ENCODE measurements at regions of chr4 and their contacts with region 1.

Region 1: DNA sequence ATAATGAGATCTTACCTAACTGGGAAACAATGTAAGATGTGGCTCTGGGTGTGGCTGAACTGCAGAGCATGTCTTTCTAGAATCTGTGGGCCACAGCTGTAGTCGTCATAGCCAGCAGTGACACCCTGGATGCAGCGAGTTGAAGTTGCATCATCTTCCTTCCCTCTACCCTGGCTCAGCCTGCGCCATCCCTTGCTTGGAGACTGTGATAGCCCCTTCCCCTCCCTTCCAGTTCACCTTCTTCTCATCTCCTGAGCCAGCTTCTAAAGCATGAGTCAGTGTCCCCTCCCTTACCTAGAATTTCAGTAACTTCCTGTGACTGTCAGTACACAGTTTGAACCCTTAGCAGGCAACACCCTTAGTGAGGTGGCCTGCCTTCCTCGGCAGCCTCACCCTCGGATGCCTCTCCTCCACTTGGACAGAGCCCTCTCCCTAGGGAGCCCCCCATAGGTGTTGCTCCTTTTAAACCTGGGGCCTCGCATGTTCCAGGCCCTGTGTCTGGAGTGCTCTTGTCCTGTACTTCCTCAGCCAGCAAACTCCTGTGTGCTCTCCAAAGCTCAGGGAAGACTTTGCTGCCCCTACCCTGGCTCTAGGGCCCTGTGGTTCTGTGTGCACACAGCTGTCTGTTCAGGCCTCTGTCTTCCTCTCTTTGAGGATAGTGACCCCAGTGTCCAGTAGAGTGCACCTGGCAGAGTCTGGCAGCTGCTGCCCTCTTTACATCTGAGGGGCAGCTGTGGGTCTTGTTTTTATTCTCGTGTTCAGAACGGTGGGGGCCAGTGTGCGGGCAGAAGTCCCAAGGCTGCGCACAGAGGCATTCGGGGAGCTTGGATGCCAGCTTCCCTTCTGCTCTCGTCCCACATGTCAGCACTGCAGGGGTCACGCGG is 43.8 kb upstream of the TADA2B start:
- DNase-seq: peak; percentile 79
- H3K4me3 Mint-ChIP-seq: peak overlapping the region; percentile 41
- H3K27ac Mint-ChIP-seq: peak overlapping the region; percentile 95
- H3K4me1 Mint-ChIP-seq: peaks cover 44% of the 10 kb centered on the region
- H3K27me3 Mint-ChIP-seq: no peaks in the 10 kb centered on the region

Region 2: DNA sequence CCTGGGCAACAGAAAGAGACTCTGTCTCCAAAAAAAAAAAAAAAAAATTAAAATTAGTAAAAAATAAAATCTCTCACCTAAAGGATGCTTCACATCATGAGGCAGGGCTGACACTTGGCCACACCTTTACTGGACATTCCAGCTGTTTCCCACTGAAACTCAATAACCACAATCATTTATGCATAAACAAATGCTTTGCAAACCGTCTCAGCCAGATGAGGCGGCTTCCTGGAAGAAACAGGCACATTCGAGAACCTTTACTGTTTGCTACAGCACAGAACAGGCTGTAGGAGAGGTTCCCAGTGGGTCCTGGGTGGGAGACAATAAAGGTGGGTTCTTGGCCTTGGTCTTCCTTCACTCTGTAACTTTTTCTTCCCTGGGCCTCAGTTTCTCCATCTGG is 100.7 kb before region 1 on chr4:
- CTCF ChIA-PET with region 1: no interaction called
- POLR2A ChIA-PET with region 1: interaction called, 10 read pairs
- DNase-seq: peak; percentile 39
- H3K4me3 Mint-ChIP-seq: peak overlapping the region; percentile 40
- H3K27ac Mint-ChIP-seq: peak overlapping the region; percentile 94
- H3K4me1 Mint-ChIP-seq: peaks cover 63% of the 10 kb centered on the region
- H3K27me3 Mint-ChIP-seq: no peaks in the 10 kb centered on the region

Region 3: DNA sequence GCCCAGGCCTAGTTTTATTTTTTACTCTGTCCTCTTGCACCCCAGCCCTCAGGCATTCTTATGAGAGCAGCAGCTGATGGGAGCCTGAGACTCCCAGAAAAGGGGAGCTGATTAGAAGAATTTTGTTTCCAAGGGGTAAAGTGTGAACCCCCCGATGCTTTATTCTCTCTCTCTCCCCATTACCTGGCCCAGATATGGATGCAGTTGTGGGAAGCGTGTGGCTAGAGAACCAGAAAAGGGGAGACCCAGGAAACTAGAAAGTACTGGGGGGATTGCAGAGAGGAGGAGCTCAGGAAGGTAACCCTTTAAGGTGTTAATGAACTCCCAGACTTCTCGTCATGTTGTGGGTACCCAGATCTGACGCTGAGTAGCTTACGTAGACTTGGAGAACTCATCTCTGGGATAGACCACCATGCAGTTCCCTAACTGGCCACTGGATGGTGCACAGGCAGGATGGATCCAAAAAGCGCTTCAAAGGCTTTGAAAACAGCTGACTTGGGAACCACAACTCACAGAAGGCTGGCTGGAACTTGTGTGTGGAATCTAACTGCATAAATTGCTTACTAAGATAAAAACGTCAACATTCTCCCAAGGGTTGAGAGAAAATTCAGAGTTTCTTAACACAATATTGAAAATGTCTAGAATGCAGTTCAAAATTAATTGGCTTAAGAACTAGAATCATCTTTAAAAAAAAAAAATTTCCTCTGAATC is 25.1 kb before region 1 on chr4:
- CTCF ChIA-PET with region 1: interaction called, 17 read pairs
- POLR2A ChIA-PET with region 1: interaction called, 8 read pairs
- DNase-seq: peak; percentile 83
- H3K4me3 Mint-ChIP-seq: no peak overlapping the region
- H3K27ac Mint-ChIP-seq: no peak overlapping the region
- H3K4me1 Mint-ChIP-seq: peaks cover 19% of the 10 kb centered on the region
- H3K27me3 Mint-ChIP-seq: no peaks in the 10 kb centered on the region

Region 4: DNA sequence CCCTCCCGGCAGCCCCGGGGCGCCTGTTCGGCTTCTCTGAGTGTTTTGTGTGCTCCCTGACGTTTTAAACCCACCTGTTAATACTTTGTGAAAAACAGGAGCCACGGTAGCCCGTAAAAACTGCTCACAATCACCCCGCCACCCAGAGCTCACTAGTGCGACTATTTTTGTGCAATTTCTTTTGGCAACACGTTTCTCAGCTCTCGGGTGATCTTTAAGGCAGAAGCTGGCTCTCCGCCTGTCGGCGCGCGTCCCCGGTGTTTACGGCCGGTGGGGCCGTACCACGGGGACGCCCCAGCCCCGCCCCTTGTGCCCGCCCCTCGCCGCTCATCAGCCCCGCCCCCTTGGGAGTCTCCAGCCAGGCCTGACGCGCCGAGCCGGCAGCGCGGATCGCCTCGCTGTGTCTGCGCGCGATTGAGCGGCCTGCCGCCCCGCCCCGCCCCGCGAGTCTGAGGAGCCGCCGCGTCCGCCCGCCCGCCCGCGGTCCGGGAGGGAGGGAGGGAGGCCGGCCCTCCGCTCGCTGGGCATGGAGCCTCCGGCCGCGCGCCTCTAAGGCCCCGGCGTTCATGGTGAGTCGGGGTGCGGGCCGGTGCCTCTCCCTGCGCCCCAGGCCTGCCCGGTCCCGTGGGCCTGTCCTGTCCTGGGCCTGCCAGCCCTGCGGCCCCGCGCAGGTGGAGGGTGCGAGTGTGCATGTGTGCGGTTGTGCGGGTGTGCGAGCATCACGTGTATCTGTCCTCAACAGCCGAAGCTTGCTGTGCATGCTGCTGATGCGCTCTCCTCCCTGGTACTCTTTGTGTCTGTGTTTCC is 12.4 kb before region 1 on chr4:
- CTCF ChIA-PET with region 1: interaction called, 24 read pairs
- POLR2A ChIA-PET with region 1: interaction called, 69 read pairs
- DNase-seq: peak; percentile 95
- H3K4me3 Mint-ChIP-seq: peak overlapping the region; percentile 98
- H3K27ac Mint-ChIP-seq: peak overlapping the region; percentile 95
- H3K4me1 Mint-ChIP-seq: peaks cover 81% of the 10 kb centered on the region
- H3K27me3 Mint-ChIP-seq: no peaks in the 10 kb centered on the region

Region 5: DNA sequence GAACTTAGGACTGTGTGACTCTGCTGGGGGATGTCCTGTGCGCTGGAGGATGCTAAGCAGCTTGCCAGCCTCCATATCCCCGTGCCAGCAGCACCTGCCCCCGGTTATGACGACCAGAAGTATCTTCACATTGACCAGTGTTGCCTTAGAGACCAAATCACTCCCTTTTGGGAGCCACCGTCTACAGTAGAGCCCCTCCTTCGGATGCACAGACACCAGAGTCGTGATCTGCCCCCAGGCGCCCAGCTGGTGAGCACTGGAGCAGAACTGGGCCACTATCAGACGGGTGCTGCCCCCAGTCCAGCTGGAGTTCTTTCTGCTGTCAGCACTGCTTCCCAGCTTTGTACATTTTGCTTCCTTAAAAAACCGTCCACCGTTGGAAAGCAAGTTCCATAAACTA is 13.8 kb after region 1 on chr4:
- CTCF ChIA-PET with region 1: interaction called, 5 read pairs
- POLR2A ChIA-PET with region 1: interaction called, 16 read pairs
- DNase-seq: no peak
- H3K4me3 Mint-ChIP-seq: no peak overlapping the region
- H3K27ac Mint-ChIP-seq: no peak overlapping the region
- H3K4me1 Mint-ChIP-seq: peaks cover 27% of the 10 kb centered on the region
- H3K27me3 Mint-ChIP-seq: no peaks in the 10 kb centered on the region

Region 6: GRCh38 chr4:7042697-7043464 is 43.5 kb after region 1 on chr4 and contains the start of gene TADA2B:
- CTCF ChIA-PET with region 1: interaction called, 19 read pairs
- POLR2A ChIA-PET with region 1: interaction called, 17 read pairs
- DNase-seq: peak; percentile 96
- H3K4me3 Mint-ChIP-seq: peak within 1 kb of the TSS; percentile 94
- H3K27ac Mint-ChIP-seq: peak within 1 kb of the TSS; percentile 78
- H3K4me1 Mint-ChIP-seq: peaks cover 50% of the 10 kb centered on the region
- H3K27me3 Mint-ChIP-seq: peaks cover 10% of the 10 kb centered on the region
- total RNA-seq, gene TADA2B: 26.6 to 27.3 TPM

Measured in activated CD4-positive, alpha-beta memory T cell treated with anti-CD3 and anti-CD28 coated beads, Interleukin-2, amount 10 ng/mL, durations not matched to agents 7 days and 5 days (primary cell).